ENCODE measurements at regions of chr12 and their contacts with region 1.

Region 1: DNA sequence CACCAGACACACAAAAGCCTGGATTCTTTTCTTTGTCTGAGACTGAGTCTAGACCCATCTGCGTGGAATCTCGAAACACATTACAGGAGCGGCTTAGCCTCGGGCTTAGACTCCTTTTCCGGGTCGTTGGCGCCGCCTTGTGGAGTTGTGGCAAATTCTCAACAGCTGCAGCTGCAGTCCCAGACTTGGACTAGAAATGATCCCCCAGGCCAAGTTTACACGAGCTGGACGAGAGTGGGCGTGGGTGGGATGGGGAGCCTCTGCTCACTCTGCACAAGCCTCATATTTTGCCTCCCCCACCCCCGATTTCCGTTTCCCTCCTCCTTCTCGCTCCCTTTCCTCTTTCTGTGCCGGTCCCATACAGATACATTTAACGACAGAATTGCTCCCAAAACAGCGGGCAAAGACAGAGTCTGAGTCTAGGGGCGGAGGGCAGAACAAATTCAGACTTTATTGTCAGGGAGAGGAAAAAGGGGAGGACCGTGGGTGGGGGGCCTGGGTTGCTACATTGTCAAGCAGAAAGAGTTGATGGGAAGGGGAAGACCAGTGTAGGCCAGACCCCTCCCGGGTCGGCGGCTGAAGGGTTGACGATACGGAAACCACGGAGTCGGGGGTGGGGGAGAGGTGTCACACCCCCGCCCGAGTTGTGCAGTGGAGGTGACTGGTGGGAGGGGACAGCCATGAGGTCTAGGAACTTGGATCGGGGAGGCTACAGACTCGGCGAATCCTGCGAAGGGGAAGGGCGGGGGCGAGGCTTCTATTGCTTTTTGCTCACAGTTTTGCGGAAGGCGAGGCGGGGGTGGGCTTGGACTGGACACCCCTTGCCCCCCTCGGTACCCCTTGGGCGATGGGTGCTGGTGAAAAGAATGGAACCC is 4.7 kb upstream of the GPR84 start:
- DNase-seq: peak; percentile 98

Region 2: GRCh38 chr12:54220092-54220557 is 148.8 kb before region 1 on chr12:
- intact Hi-C with region 1: loop called in 1 of 2 experiments (anchors 10 kb)
- DNase-seq: peak; percentile 80

Region 3: DNA sequence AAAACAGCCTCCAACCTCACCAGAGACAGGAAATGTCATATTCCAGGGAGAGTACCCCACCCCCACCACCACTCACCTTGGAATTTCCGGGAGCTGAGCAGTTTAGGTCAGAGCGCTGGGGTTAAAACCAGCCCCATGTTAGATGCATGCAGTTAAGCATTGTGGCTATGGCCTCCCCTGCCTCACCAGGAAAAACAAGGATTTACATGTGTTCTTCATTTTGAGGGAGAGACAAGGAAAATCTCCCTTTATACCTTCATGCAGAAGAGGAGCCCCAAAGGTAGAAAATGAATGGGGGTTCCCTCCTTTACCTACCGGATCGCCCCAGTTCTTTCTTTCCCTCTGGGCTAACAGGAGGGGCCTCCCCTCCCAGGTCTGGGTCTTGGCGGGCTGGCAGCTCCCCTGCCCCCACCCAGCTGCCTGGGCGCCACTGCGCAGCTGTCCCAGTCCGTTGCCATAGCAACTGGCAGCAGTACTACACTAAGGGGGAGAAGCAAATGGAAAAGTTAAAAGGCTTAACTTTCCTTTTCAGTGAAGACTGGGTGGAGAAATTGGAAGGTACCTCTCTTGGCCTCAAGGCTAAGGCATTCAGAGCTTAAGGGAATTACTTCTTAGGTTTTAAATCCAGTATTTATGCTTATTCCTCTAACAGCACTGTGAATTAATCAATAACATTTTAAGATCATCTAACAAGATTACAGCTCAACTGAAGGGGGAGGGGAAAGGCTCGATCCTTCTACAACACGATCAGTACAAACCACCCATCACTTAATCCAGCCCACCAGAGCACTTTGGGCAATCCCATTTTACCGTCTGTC is 109.5 kb before region 1 on chr12:
- intact Hi-C with region 1: loop called in 1 of 2 experiments (anchors 10 kb)
- DNase-seq: peak; percentile 87

Region 4: DNA sequence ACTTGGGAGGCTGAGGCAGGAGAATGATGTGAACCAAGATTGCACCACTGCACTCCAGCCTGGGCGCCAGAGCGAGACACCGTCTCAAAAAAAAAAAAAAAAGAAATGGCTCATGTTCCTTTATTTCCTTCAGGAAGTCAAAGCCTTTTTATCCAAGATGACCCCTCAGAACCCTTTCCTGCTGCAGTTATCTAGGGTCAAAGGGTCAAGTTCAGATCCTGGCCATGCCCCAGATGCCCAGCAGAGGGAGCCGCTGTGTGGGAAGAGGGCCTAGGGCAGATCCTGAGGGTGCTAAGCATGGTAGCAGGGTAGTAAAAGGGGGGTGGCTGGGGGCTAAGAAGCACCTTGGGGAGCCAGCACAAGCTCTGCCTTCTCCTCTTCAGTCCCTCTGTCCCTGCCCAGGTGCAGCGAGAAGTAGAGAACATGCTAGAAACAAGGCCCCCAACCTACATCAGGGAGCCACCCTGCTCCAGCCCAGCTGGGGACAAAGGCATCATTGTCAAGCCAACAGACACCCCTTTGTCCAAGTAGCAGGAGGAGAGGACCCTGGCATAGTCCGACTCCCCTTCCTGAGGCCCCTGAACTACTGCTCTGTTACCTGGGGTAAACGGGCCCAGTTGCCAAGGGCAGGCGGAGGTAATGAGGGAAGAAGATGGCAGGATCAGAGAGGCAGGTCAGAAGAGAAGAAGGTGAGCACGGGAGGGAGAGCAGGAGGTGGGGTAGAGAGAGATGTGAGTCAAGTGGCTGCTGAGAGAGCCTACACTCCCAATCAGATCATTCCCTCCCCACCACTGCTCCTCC is 74.6 kb before region 1 on chr12:
- intact Hi-C with region 1: loop called in 1 of 2 experiments (anchors 10 kb)
- DNase-seq: peak; percentile 85